Cardiac septum (tissue), 1 donor: ENCODE measurements at regions of chr14 and their contacts with region 1.

Region 1: DNA sequence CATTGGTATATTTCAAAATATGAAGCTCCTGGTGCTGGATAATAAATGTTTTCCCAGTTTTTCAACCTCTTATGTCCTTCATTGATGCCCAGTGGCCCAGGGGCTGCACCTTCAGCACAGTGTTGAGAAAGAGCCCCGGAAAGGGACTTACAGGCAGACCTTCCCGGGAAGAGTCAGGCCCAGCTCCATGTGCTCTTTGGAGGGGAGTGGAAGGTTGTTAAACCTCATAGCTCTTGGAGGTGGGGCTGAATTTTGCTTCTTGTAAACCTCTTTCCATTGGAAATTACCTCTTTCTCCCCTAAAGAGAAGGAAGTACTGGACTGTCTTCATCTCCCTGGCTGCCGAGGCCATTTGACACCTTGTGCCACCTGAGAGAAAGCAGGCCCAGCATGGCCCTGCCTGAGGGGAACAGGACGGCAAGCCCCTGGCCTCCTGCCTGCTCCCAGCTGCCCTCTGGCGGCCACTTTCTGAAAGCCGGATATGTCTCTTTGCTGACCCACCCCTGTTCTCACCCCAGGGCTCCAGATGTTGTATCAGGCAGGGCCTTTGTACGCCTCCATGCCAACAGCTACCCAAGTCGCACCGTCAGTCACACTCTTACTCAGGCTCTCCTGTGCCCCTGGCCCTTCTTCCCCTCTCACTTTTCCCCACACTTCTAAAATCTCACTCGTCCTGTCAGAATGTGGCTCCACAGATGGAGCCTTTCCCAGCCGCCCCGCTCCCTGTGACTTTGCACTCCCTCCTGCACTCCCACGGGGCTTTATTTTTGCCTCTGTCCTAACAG is 43.0 kb downstream of the EVL start:
- DNase-seq: peak; percentile 93

Region 2: GRCh38 chr14:99982537-99983250 is 125.5 kb before region 1 on chr14:
- intact Hi-C with region 1: loop called (anchors 1 kb)
- DNase-seq: no peak

Region 3: DNA sequence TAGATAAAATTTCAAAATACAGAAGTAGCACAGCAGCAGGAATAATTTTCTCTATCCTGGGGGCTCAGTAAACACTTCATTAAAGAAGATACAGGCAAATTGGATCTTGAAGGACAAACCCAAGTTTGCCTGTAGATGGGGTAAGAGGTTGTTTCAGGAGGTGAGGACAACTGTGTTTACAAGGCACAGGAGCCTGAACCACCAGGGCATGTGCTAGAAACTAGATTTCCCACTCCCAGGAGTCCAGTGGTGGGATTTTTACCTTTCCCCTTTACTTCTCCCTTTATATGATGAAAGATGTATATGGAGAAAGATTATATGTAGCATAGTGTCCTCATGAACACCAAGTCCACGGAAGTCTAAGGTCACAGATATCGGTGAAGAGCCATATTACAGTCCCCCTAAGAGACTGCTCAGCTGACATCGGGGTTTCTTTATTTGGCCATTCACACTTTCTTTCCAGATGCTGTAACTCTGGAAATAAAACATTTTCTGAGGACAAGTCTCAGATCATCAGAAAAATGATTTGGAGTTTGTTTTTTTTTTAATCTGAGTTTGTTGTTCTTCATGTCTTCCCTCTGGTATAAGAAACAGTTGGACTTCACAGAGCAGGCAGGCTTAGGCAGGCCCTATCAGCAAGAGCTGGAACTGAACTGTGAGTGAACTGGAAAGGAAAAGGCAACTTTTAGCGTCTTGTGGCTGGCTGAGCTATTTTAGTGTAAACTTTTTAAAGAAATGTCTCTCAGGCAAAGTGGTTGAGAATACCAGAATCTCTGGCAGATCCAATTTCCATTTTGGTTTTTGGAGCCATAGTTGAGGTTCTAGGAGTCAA is 51.1 kb before region 1 on chr14:
- intact Hi-C with region 1: loop called (anchors 5 kb)
- DNase-seq: no peak